Mammary epithelial cell (primary cell): ENCODE measurements at regions of chr18 and their contacts with region 1.

Region 1: DNA sequence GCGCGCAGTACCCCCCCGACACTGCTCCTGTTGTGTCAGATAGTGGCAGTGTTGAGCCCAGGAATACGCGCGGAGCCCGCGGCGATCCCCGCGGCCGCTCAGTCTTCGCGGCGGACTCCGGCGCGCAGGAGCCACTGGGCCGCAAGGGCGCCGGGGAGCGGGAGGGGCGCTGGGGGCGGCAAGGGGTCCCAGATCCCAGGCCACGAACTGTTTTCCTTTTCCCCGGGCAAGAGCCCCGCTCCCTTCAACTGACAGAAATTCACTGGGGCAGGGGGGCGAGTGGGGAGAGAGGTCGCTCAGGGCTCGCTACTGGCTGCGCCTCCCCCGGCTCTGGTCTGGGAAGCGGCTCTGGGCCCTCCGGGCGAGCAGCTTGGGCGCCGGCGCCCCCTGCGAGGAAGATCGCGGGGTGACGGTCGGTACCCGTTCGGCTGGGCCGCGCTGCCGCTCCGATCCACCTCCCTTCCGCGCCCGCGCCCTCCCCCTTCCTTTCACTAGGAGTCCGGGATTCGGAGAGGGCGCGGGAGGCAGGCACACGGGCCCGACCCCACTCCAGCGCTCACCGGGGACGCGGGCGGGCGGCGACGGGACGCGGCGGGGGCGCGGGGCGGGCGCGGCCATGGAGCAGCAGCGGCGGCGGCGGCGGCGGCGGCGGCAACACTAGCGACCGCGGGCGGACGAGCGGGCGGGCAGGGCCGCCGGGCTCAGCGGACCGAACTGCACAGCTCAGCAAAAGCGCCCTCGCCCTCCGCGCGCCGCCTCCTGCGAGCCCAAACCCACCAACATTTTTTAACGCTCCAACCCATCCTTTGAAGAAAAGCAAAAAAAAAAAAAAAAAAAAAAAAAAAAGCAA is 1.4 kb upstream of the SETBP1 start:
- DNase-seq: peak; percentile 80
- H3K4me3 ChIP-seq: peak overlapping the region; percentile 78 to 95 (median 90)
- H3K27ac ChIP-seq: peak overlapping the region; percentile 63
- H3K4me1 ChIP-seq: peaks cover 30% of the 10 kb centered on the region
- H3K27me3 ChIP-seq: no peaks in the 10 kb centered on the region
- CTCF ChIP-seq: peak; percentile 60 to 69

Region 2: GRCh38 chr18:44130376-44130942 is 548.8 kb before region 1 on chr18:
- CTCF ChIA-PET with region 1: no interaction called
- dilution Hi-C with region 1: no loop called
- in situ Hi-C with region 1: loop called in 1 of 2 experiments (anchors 25 kb)
- intact Hi-C with region 1: loop called (anchors 2 kb)
- DNase-seq: peak; percentile 26
- H3K4me3 ChIP-seq: no peak overlapping the region
- H3K27ac ChIP-seq: no peak overlapping the region
- H3K4me1 ChIP-seq: no peaks in the 10 kb centered on the region
- H3K27me3 ChIP-seq: no peaks in the 10 kb centered on the region
- CTCF ChIP-seq: peak; percentile 85 to 87

Region 3: DNA sequence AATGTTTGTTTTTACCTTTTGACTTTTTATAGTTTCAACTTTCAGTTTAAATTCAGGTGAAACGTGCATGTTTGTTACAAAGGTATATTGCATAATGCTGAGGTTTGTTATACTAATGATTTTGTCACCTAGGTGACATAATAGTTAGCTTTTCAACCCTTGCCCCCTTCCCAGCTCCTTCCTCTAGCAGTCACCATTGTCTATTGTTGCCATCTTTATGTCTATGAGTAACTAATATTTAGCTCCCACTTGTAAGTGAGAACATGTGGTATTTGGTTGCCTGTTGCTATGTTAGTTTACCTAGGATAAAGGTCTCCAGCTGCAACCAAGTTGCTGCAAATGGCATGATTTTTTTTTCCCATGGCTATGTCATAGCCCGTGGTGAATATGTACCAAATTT is 320.9 kb before region 1 on chr18:
- CTCF ChIA-PET with region 1: no interaction called
- dilution Hi-C with region 1: no loop called
- in situ Hi-C with region 1: no loop called
- intact Hi-C with region 1: no loop called
- DNase-seq: peak; percentile 16
- H3K4me3 ChIP-seq: no peak overlapping the region
- H3K27ac ChIP-seq: no peak overlapping the region
- H3K4me1 ChIP-seq: no peaks in the 10 kb centered on the region
- H3K27me3 ChIP-seq: no peaks in the 10 kb centered on the region
- CTCF ChIP-seq: no peak

Region 4: DNA sequence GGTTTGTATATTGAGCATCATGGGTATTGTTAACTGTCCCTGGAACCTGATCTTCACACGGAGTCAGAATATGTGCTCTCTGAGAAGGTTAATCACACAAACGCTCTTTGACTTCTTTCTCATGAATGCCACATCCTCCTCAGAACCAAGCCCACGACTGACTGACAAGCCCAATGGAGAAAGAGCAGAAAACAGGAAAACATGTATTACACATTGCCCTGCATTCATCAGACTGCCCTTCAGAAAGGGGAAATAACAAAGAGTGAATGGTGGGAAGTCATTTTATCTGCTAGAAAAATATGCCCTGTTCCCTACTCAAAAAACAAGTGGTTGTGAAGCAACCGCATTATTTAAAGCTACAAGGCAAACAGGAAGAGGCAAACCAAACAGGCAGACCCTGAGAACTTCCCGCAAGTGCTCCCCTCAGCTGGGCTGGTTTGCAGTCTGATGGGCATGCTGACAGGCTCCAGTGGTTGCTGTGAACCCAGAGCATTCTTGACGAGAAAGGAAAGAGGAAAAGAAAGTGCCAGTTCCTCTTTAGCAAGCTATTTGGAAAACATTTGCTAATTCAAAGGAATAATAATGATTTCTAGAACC is 171.5 kb before region 1 on chr18:
- CTCF ChIA-PET with region 1: no interaction called
- dilution Hi-C with region 1: no loop called
- in situ Hi-C with region 1: no loop called
- intact Hi-C with region 1: no loop called
- DNase-seq: no peak
- H3K4me3 ChIP-seq: no peak overlapping the region
- H3K27ac ChIP-seq: no peak overlapping the region
- H3K4me1 ChIP-seq: no peaks in the 10 kb centered on the region
- H3K27me3 ChIP-seq: no peaks in the 10 kb centered on the region
- CTCF ChIP-seq: no peak

Region 5: GRCh38 chr18:44564922-44565321 is 114.4 kb before region 1 on chr18:
- CTCF ChIA-PET with region 1: interaction called, 3 read pairs
- dilution Hi-C with region 1: no loop called
- in situ Hi-C with region 1: no loop called
- intact Hi-C with region 1: loop called (anchors 5 kb)
- DNase-seq: peak; percentile 81
- H3K4me3 ChIP-seq: no peak overlapping the region
- H3K27ac ChIP-seq: no peak overlapping the region
- H3K4me1 ChIP-seq: peaks cover 28% of the 10 kb centered on the region
- H3K27me3 ChIP-seq: no peaks in the 10 kb centered on the region
- CTCF ChIP-seq: no peak

Region 6: DNA sequence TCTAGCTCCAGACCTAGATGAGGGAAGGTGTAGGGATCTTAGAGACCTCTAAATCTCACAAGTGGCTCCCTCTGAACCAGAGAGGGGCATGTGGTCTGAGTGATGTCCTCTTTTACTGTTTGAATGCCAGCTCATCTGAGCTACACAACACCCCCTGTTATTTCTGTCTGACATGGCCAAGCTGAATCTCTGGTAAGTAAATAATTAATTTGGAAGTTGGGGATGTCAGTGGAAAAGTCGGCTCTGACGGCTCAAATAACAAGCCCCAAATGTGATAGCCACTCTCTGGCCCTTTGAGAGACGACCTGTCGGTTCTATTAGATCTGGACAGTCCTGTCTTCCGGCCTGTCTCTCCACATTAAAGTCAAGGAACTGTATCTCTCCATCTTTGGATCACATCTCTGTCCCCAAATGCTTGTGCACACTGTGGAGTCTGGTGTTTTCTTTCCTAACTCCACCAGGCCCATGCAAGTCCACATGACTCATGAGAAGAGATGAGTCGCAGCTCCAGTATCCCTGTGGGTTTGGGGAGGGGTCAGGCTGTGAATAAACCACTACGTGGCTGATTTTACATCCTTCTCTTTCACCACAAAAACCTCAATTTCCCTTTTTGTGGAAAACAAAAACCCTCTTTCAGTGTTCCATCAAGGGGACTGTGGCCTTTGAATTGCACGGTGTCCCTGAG is 53.9 kb after region 1 on chr18:
- CTCF ChIA-PET with region 1: no interaction called
- dilution Hi-C with region 1: no loop called
- in situ Hi-C with region 1: no loop called
- intact Hi-C with region 1: loop called (anchors 1 kb)
- DNase-seq: peak; percentile 93
- H3K4me3 ChIP-seq: no peak overlapping the region
- H3K27ac ChIP-seq: peak overlapping the region; percentile 88
- H3K4me1 ChIP-seq: peaks cover 56% of the 10 kb centered on the region
- H3K27me3 ChIP-seq: no peaks in the 10 kb centered on the region
- CTCF ChIP-seq: no peak

Region 7: GRCh38 chr18:44796442-44797428 is 117.5 kb after region 1 on chr18:
- CTCF ChIA-PET with region 1: no interaction called
- dilution Hi-C with region 1: no loop called
- in situ Hi-C with region 1: no loop called
- intact Hi-C with region 1: no loop called
- DNase-seq: no peak
- H3K4me3 ChIP-seq: no peak overlapping the region
- H3K27ac ChIP-seq: no peak overlapping the region
- H3K4me1 ChIP-seq: no peaks in the 10 kb centered on the region
- H3K27me3 ChIP-seq: no peaks in the 10 kb centered on the region
- CTCF ChIP-seq: no peak

Region 8: GRCh38 chr18:44895176-44895798 is 216.0 kb after region 1 on chr18:
- CTCF ChIA-PET with region 1: no interaction called
- dilution Hi-C with region 1: no loop called
- in situ Hi-C with region 1: loop called in 1 of 2 experiments (anchors 10 kb)
- intact Hi-C with region 1: loop called (anchors 1 kb)
- DNase-seq: peak; percentile 54
- H3K4me3 ChIP-seq: no peak overlapping the region
- H3K27ac ChIP-seq: no peak overlapping the region
- H3K4me1 ChIP-seq: peaks cover 9% of the 10 kb centered on the region
- H3K27me3 ChIP-seq: no peaks in the 10 kb centered on the region
- CTCF ChIP-seq: peak; percentile 56 to 76